Panc1 (cell line): ENCODE measurements at regions of chr6 and their contacts with region 1.

Region 1: DNA sequence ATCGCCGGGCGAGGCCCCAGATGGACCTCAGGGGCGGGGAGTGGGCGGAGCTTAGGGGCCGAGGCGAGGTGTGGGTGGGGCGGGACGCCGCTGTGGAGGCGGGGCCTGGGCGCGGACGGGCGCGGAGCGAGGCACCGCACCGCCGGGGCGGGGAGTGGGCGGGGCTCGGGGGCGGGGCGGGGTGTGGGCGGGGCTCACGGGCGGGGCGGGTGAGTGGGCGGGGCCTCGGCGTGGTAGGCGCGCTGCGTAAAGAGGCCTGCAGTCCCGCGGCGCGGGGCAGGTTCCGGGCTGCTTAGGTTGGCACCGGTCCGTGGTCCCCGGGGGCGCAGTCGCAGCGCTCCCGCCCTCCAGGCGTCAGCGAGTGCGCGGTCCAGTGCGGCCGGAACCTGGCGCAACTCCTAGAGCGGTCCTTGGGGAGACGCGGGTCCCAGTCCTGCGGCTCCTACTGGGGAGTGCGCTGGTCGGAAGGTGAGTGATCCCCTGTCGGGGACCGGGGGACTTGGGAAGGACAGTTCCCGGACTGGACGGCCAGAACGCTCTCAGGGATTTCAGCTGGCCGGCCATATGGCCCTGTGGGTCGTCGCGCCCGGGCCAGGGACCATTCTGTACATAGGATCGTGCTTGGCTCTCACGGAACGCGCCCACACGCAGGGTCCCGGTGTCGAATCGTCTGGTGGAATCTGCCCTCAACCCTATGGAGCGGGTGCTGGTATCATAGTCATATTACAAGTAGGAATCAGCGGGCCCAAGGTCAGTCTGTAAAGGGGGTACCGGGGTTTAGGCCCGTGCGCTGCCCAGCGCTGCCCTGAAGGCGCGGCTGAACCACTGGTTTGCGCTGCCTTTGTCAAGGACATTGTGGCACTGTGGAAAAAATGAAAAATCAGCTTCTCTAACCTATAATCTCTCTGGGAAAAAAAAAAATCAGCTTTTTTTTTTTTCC is at the start of gene NQO2:
- DNase-seq: no peak
- ATAC-seq: peak; percentile 90
- H3K4me3 ChIP-seq: peak within 1 kb of the TSS; percentile 84 to 92
- H3K27ac ChIP-seq: peak within 1 kb of the TSS; percentile 85
- H3K4me1 ChIP-seq: peaks cover 8% of the 10 kb centered on the region
- H3K27me3 ChIP-seq: no peaks in the 10 kb centered on the region
- CTCF ChIP-seq: no peak
- total RNA-seq, gene NQO2: 45.7 TPM

Region 2: GRCh38 chr6:2684059-2684749 is 315.7 kb before region 1 on chr6:
- CTCF ChIA-PET with region 1: no interaction called
- POLR2A ChIA-PET with region 1: no interaction called
- in situ Hi-C with region 1: no loop called
- intact Hi-C with region 1: no loop called
- DNase-seq: peak; percentile 24
- ATAC-seq: peak; percentile 38; the same call in 1 of the 2 replicates
- H3K4me3 ChIP-seq: peak overlapping the region in 1 of 2 experiments; percentile 27; a peak in 1 of 4 replicates
- H3K27ac ChIP-seq: peak overlapping the region; percentile 12; the same call in 1 of the 2 replicates
- H3K4me1 ChIP-seq: no peaks in the 10 kb centered on the region
- H3K27me3 ChIP-seq: no peaks in the 10 kb centered on the region
- CTCF ChIP-seq: no peak

Region 3: GRCh38 chr6:2940010-2940850 is 59.7 kb before region 1 on chr6:
- CTCF ChIA-PET with region 1: no interaction called
- POLR2A ChIA-PET with region 1: no interaction called
- in situ Hi-C with region 1: no loop called
- intact Hi-C with region 1: no loop called
- DNase-seq: no peak
- ATAC-seq: no peak
- H3K4me3 ChIP-seq: no peak overlapping the region
- H3K27ac ChIP-seq: no peak overlapping the region
- H3K4me1 ChIP-seq: no peaks in the 10 kb centered on the region
- H3K27me3 ChIP-seq: no peaks in the 10 kb centered on the region
- CTCF ChIP-seq: no peak

Region 4: GRCh38 chr6:3009930-3010329 is 10.0 kb after region 1 on chr6:
- CTCF ChIA-PET with region 1: interaction called, 3 read pairs
- POLR2A ChIA-PET with region 1: interaction called, 13 read pairs
- in situ Hi-C with region 1: no loop called
- intact Hi-C with region 1: no loop called
- DNase-seq: no peak
- ATAC-seq: no peak
- H3K4me3 ChIP-seq: no peak overlapping the region
- H3K27ac ChIP-seq: no peak overlapping the region
- H3K4me1 ChIP-seq: peaks cover 6% of the 10 kb centered on the region
- H3K27me3 ChIP-seq: no peaks in the 10 kb centered on the region
- CTCF ChIP-seq: no peak

Region 5: DNA sequence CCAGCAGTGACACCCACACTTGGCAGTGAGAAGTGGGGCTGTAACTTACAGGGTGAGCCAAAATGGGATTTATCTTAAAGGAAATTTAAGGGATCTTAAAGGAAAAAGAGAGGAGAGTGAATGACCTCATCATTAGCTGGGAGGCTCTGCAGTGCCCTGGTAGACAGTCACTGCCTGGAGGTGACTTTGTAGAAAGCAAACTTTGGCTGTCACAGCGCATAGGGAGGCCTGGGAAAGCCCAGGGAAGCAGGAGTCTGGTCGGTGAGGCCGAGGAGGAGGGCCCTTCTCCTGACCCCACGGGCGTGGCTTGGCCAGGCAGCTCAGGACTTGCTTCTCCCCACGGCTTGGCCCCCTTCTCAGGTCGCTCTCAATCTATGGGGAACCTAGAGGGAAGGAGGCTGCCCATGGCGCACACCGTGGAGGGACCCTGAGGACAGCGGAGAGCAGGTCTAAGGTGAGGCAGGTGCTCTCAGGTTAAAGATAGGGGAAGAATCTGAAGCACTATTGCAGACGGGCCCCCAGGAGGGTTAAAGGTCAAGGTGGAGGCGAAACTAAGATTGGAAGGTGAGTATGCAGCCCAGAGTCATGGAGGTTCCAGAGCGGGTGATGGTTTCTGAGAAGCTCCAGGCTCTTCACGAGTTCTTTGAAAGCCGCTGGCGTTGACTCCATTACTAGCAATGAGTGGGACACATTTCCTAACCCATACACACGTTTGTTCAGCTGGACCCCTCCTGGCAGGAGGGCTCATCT is 52.8 kb after region 1 on chr6:
- CTCF ChIA-PET with region 1: interaction called, 3 read pairs
- POLR2A ChIA-PET with region 1: no interaction called
- in situ Hi-C with region 1: no loop called
- intact Hi-C with region 1: loop called (anchors 1 kb)
- DNase-seq: no peak
- ATAC-seq: no peak
- H3K4me3 ChIP-seq: peak overlapping the region in 1 of 2 experiments; percentile 56; a peak in 3 of 4 replicates
- H3K27ac ChIP-seq: no peak overlapping the region; the same call in 1 of the 2 replicates
- H3K4me1 ChIP-seq: peaks cover 11% of the 10 kb centered on the region
- H3K27me3 ChIP-seq: no peaks in the 10 kb centered on the region; the same call in 1 of the 2 replicates
- CTCF ChIP-seq: no peak

Region 6: GRCh38 chr6:3193102-3193849 is 193.4 kb after region 1 on chr6:
- CTCF ChIA-PET with region 1: no interaction called
- POLR2A ChIA-PET with region 1: interaction called, 10 read pairs
- in situ Hi-C with region 1: no loop called
- intact Hi-C with region 1: no loop called
- DNase-seq: no peak
- ATAC-seq: no peak
- H3K4me3 ChIP-seq: no peak overlapping the region
- H3K27ac ChIP-seq: no peak overlapping the region
- H3K4me1 ChIP-seq: no peaks in the 10 kb centered on the region
- H3K27me3 ChIP-seq: no peaks in the 10 kb centered on the region
- CTCF ChIP-seq: no peak